ENCODE measurements at regions of chr18 and their contacts with region 1.

Region 1: GRCh38 chr18:11654736-11655605 is 34.1 kb upstream of the GNAL start:
- DNase-seq: peak; percentile 75
- H3K4me3 Mint-ChIP-seq: no peak overlapping the region
- H3K27ac Mint-ChIP-seq: no peak overlapping the region
- H3K4me1 Mint-ChIP-seq: no peaks in the 10 kb centered on the region
- H3K27me3 Mint-ChIP-seq: peaks cover 93% of the 10 kb centered on the region
- CTCF ChIP-seq: peak; percentile 76

Region 2: GRCh38 chr18:11872479-11873136 is 217.6 kb after region 1 on chr18:
- CTCF ChIA-PET with region 1: no interaction called
- intact Hi-C with region 1: loop called (anchors 5 kb)
- DNase-seq: peak; percentile 50
- H3K4me3 Mint-ChIP-seq: no peak overlapping the region
- H3K27ac Mint-ChIP-seq: no peak overlapping the region
- H3K4me1 Mint-ChIP-seq: peaks cover 6% of the 10 kb centered on the region
- H3K27me3 Mint-ChIP-seq: no peaks in the 10 kb centered on the region
- CTCF ChIP-seq: peak; percentile 60

Region 3: GRCh38 chr18:12038639-12039417 is 383.9 kb after region 1 on chr18:
- CTCF ChIA-PET with region 1: no interaction called
- intact Hi-C with region 1: loop called (anchors 5 kb)
- DNase-seq: peak; percentile 85
- H3K4me3 Mint-ChIP-seq: peak overlapping the region; percentile 79
- H3K27ac Mint-ChIP-seq: no peak overlapping the region
- H3K4me1 Mint-ChIP-seq: peaks cover 8% of the 10 kb centered on the region
- H3K27me3 Mint-ChIP-seq: peaks cover 23% of the 10 kb centered on the region
- CTCF ChIP-seq: peak; percentile 99